ENCODE measurements at regions of chr1 and their contacts with region 1.

Region 1: GRCh38 chr1:40143891-40144575 is 17.2 kb upstream of the RLF start:
- DNase-seq: no peak
- ATAC-seq: peak; percentile 88

Region 2: GRCh38 chr1:40338745-40339424 is 194.9 kb after region 1 on chr1:
- intact Hi-C with region 1: loop called (anchors 5 kb)
- DNase-seq: peak; percentile 85
- ATAC-seq: peak; percentile 70